Activated naive CD8-positive, alpha-beta T cell treated with anti-CD3 and anti-CD28 coated beads, Interleukin-2, amount 10 ng/mL, durations not matched to agents 7 days and 5 days (primary cell): ENCODE measurements at regions of chr20 and their contacts with region 1.

Region 1: GRCh38 chr20:34363062-34363464 is at the start of gene ITCH:
- DNase-seq: peak; percentile 91
- ATAC-seq: peak; percentile 96
- H3K4me3 Mint-ChIP-seq: peak within 1 kb of the TSS; percentile 95
- H3K27ac Mint-ChIP-seq: peak within 1 kb of the TSS; percentile 96
- H3K4me1 Mint-ChIP-seq: peaks cover 21% of the 10 kb centered on the region
- H3K27me3 Mint-ChIP-seq: peaks cover 2% of the 10 kb centered on the region
- total RNA-seq, gene ITCH: 57.4 to 59.7 TPM

Region 2: DNA sequence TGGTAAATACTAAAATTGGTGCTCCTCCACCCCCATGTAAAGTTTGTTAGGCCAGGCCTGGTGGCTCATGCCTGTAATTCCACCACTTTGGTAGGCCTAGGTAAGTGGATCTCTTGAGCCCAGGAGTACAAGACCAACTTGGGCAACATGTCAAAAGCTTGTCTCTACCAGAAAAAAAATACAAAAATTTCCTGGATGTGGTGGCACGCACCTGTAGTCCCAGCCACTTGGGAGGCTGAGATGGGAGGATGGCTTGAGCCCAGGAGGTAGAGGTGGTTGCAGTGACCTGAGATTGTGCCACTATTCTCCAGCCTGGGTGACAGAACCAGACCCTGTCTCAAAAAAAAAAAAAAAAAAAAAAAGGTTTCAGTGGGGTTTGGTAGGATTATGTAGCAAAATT is 41.7 kb after region 1 on chr20:
- POLR2A ChIA-PET with region 1: interaction called, 10 read pairs
- DNase-seq: no peak
- ATAC-seq: no peak
- H3K4me3 Mint-ChIP-seq: peak overlapping the region; percentile 54
- H3K27ac Mint-ChIP-seq: peak overlapping the region; percentile 81
- H3K4me1 Mint-ChIP-seq: peaks cover 28% of the 10 kb centered on the region
- H3K27me3 Mint-ChIP-seq: no peaks in the 10 kb centered on the region

Region 3: GRCh38 chr20:34516247-34517113 is 153.4 kb after region 1 on chr20 and contains the start of gene DYNLRB1:
- POLR2A ChIA-PET with region 1: interaction called, 29 read pairs
- DNase-seq: peak; percentile 93
- ATAC-seq: peak; percentile 86
- H3K4me3 Mint-ChIP-seq: peak within 1 kb of the TSS; percentile 98
- H3K27ac Mint-ChIP-seq: peak within 1 kb of the TSS; percentile 96
- H3K4me1 Mint-ChIP-seq: peaks cover 22% of the 10 kb centered on the region
- H3K27me3 Mint-ChIP-seq: no peaks in the 10 kb centered on the region
- total RNA-seq, gene DYNLRB1: 91.2 to 96.8 TPM